ENCODE measurements at regions of chr7 and their contacts with region 1.

Region 1: DNA sequence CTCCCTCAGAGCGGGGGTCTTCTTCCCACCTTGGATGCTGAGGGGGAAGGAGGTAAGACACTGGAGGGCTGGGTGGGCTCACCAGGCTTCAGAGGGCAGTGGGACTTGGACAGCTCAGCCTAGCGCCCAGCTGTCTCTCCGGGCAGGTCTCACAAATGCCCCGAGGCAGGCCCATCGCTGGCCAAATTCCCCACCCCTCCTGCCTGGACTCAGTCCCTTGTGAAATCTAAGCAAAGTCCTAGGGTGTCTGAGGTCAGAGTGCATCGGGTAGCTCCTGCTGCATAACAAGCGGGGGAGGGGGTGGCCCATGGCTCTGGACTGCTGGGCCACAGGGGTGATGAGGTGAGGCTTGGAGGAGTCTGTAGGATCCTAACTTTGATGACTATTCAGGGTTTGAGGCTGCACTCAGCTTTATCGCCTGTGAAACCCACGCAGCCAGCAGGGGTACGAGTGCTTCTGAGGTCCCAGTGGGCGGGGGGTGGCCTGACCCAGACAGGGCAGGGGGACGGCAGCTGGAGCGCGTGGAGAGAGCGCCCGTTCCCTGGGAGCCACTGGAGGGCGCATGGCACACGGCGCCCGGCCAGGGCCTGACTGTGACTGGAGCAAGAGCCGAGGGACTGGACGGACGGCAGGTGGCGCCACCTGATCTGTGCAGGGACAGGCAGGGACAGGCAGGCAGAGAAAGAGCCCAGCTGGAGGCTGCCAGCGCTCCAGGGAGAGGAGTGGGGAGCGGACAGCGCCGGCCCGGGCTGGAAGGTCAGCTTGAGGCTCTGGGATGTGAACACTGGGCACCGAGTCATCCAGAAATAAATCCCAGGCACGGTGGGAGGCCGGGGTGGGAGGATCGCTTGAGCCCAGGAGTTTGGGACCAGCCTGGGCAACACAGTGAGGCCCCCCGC is 10.0 kb downstream of the CYP2W1 start:
- DNase-seq: peak; percentile 91
- H3K4me3 ChIP-seq: no peak overlapping the region
- H3K27ac ChIP-seq: no peak overlapping the region
- H3K27me3 ChIP-seq: peaks cover 4% of the 10 kb centered on the region
- CTCF ChIP-seq: peak; percentile 99

Region 2: GRCh38 chr7:981793-982510 is 11.0 kb before region 1 on chr7:
- CTCF ChIA-PET with region 1: interaction called, 22 read pairs
- POLR2A ChIA-PET with region 1: no interaction called
- DNase-seq: no peak
- H3K4me3 ChIP-seq: no peak overlapping the region
- H3K27ac ChIP-seq: no peak overlapping the region
- H3K27me3 ChIP-seq: peaks cover 8% of the 10 kb centered on the region
- CTCF ChIP-seq: no peak

Region 3: DNA sequence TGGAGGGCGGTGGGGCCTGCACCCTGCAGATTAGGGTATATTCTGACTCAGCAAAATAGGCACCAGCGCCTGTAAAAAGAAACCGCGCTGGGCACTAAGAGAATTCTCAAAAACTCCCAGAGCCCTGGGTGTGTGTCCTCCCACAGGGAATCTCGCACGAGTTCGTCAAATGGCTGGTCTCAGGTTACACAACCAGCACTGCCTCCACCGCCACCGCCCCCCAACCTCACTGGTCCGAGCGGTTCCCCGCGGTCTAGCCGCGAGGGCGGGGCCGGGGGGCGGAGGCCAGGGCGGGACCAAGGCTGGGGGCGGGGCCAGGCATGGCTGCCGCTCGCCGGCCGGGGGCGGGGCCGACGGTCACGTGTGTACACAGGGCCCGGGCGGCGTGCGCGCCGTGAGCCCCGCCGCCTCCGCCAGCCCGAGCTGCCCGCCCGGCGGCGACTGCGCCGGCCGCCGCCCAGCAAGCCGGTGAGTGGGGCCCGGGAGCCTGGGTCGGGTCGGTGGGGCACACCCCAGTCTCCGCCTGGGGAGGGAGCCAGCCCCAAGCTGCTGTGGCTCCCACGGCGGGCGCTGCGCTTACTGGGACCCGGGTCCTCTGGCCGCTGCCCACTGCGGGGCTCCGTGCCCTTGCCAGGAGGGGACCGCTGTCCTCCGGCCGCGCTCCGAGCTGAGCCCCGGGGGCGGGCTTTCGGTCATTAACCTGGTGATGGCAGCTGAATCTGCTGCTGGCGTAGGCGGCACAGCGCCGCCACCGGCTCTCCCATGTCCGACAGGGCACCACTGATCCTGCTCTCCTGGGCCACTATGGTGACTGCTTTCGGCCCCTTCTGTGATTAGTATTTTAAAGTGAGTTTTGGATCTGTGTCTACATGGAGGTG is 51.5 kb after region 1 on chr7 and contains the start of gene GPR146:
- CTCF ChIA-PET with region 1: interaction called, 11 read pairs
- POLR2A ChIA-PET with region 1: no interaction called
- DNase-seq: peak; percentile 87
- H3K4me3 ChIP-seq: peak within 1 kb of the TSS; percentile 62
- H3K27ac ChIP-seq: peak within 1 kb of the TSS; percentile 78
- H3K27me3 ChIP-seq: no peaks in the 10 kb centered on the region
- CTCF ChIP-seq: peak; percentile 51
- polyA plus RNA-seq, gene GPR146: 0.50 and 0.69 TPM in 2 replicates

Region 4: DNA sequence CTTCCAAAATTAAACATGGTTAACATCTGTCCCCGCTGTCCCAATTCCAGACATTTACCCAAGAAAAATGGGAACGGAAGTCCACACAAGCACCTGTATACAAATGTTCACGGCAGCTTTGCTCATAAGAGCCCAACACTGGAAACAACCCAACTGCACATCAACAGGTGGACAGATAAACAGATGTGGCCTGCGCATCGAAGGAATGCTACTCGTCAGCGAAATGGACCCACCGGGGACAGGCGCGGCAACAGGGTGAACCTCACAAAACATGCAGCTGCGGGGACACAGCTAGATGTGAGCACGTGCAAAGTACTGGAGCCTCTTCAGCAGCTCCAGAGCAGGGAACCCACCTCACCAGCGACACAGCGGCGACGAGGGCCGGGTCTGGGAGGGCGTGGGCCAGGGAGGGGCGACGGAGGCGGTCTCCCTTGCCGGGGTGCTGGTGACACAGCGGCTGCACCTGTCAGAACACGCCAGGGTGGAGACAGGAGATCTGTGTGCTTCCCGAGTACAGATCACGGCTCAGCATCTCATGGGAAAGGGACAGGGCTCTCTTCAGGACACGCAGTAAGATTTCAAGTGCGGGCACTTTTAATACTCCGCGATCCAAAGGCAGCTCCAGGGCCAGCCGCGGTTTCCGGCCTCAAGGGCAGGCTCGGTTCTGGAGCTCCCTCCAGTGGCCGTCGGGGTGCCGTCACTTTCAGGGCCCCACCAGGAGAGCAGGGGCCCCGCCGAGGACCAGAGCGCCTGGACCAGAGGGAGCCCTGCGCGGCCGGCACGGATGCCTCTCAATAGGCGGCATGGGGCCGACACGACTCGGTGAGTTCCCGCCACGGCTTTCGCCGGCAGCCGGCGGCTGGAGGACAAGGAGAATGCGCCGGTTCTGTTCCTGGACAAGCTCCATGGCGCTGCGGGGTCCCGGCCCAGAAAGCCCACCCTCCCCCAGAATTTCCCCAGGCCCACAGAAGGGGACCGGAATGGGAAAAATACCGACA is 72.6 kb after region 1 on chr7:
- CTCF ChIA-PET with region 1: interaction called, 182 read pairs
- POLR2A ChIA-PET with region 1: interaction called, 10 read pairs
- DNase-seq: no peak
- H3K4me3 ChIP-seq: no peak overlapping the region
- H3K27ac ChIP-seq: no peak overlapping the region
- H3K27me3 ChIP-seq: peaks cover 3% of the 10 kb centered on the region
- CTCF ChIP-seq: peak; percentile 87

Region 5: DNA sequence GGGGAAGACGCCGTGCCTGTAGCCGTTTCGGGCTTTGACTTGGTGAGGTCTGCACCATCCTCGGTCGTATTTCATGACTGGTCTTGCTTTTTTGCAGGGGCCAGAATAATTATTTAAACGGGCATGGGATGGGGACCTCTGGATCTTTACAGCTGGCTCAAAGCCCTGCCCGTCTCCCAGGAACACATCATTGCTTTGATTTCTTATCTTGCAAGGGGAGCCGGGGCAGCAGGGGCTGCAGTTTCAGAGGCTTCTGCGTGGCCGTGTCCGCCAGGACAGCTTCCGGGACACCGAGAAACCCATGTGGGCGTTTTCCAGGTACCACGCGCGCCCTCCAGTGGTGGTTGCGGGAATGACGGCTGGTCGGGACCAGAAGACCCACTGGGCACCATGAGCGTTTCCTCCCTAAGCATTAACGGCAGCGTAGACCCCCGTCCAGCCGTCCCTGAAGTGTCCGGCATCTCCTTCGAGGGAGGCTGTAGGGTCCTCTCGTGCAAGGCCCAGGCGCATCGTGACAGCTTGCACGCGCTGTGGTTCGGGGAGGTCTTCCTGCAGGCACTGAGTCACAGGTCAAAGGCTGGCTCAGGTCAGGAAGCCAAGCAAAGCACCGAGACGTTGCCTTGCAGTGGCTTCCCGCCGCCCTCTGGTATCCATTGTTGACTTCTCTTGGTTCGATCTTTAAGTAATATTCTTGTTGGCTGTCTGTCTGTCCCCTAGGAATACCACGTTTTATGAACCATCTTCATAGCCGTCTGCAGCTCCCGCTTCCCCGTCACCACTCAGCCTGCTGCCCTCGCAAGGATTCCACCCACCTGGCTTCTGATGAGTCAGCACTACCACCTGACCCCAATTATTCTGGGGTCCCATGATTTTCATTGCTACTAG is 183.3 kb after region 1 on chr7:
- CTCF ChIA-PET with region 1: interaction called, 16 read pairs
- POLR2A ChIA-PET with region 1: no interaction called
- DNase-seq: no peak
- H3K4me3 ChIP-seq: peak overlapping the region; percentile 20; the same call in 1 of the 2 replicates
- H3K27ac ChIP-seq: peak overlapping the region; percentile 39
- H3K27me3 ChIP-seq: peaks cover 6% of the 10 kb centered on the region
- CTCF ChIP-seq: peak; percentile 86